Endothelial cell of umbilical vein (primary cell): ENCODE measurements at regions of chr17 and their contacts with region 1.

Region 1: DNA sequence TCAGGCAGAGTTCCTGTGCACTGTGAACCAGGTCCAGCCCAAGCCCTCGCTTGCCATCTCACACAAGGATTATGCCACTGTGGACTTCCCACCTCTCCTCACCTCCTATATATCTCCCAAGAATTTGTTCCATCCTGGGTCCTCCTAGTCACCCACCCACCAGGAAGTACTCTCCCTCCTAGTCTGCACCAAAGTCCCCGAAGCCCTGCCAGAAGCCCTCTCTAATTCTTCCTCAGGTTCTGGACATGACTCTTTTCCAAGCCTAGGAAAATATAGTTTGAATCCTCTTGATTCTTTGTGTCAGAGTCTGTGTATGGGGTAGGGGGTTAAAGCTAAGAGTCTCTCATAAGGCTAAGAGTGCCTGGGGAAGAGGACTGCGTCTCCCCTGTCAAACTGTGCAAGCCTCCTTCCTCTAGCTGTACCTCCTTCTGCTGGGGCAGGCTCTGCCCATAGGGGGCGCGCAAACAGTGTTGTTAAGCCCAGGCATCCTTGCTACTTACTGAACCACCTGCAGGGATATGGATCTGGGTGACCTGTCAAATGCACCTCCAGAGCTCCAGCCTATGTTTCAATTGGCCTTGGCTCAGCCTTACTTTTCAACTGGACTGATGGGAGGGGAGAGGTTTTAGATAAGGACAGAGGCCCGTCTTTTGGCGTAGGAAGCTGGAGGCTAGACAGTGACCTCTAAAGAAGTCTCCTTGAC is 16.6 kb upstream of the DLX4 start:
- DNase-seq: peak; percentile 69
- H3K4me3 ChIP-seq: no peak overlapping the region
- H3K27ac ChIP-seq: no peak overlapping the region
- H3K4me1 ChIP-seq: peaks cover 19% of the 10 kb centered on the region
- H3K27me3 ChIP-seq: peaks cover 1 to 8% of the 10 kb centered on the region in 2 experiments
- CTCF ChIP-seq: peak; percentile 90 to 93
- POLR2A ChIP-seq: no peak

Region 2: GRCh38 chr17:49861150-49861892 is 91.0 kb before region 1 on chr17:
- CTCF ChIA-PET with region 1: interaction called, 3 read pairs
- POLR2A ChIA-PET with region 1: no interaction called
- dilution Hi-C with region 1: no loop called
- intact Hi-C with region 1: loop called (anchors 5 kb)
- DNase-seq: peak; percentile 30
- H3K4me3 ChIP-seq: no peak overlapping the region
- H3K27ac ChIP-seq: no peak overlapping the region
- H3K4me1 ChIP-seq: no peaks in the 10 kb centered on the region
- H3K27me3 ChIP-seq: peaks cover 3% of the 10 kb centered on the region in 2 experiments
- CTCF ChIP-seq: peak; percentile 57 to 78
- POLR2A ChIP-seq: no peak

Region 3: DNA sequence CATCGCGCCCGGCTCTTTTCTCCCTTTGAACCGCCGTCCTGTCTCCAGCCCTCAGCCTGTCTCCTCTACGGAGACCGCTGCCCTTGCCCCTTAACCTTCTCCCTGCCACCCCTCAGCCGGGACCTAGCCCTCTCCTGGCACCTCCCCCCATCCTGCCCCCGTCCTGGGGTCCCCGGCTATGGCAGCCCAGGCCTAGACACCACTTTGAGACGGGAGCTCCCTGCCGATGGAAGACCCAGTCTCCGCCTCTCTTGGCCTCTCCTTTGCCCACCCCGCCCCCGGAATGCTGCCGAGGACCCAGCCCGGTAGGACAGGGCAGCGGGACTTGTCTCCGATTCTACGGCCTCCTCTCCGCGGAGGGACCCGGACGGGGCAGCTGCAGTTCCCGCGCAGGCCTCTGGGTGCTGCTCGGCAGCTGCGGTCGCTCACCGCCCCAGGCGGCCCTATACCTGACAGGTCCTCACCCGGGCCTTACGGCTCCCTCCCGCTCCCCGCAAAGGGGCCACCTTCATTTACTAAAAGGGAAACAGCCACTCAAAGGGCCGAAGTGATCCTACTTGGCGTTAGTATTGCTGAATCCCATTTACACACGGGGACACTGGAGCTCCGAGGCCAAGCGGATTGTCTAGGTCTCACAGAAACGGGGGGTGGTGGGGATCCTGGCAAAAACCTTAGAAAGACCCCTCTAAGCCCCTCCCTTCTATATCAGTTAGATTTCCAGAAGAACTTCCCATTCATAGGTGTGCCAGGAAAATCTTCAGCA is 71.9 kb before region 1 on chr17:
- CTCF ChIA-PET with region 1: interaction called, 6 read pairs
- POLR2A ChIA-PET with region 1: no interaction called
- dilution Hi-C with region 1: no loop called
- intact Hi-C with region 1: loop called (anchors 5 kb)
- DNase-seq: peak; percentile 54
- H3K4me3 ChIP-seq: no peak overlapping the region
- H3K27ac ChIP-seq: no peak overlapping the region
- H3K4me1 ChIP-seq: no peaks in the 10 kb centered on the region
- H3K27me3 ChIP-seq: peaks cover 19 to 23% of the 10 kb centered on the region in 2 experiments
- CTCF ChIP-seq: peak; percentile 83 to 98
- POLR2A ChIP-seq: no peak

Region 4: DNA sequence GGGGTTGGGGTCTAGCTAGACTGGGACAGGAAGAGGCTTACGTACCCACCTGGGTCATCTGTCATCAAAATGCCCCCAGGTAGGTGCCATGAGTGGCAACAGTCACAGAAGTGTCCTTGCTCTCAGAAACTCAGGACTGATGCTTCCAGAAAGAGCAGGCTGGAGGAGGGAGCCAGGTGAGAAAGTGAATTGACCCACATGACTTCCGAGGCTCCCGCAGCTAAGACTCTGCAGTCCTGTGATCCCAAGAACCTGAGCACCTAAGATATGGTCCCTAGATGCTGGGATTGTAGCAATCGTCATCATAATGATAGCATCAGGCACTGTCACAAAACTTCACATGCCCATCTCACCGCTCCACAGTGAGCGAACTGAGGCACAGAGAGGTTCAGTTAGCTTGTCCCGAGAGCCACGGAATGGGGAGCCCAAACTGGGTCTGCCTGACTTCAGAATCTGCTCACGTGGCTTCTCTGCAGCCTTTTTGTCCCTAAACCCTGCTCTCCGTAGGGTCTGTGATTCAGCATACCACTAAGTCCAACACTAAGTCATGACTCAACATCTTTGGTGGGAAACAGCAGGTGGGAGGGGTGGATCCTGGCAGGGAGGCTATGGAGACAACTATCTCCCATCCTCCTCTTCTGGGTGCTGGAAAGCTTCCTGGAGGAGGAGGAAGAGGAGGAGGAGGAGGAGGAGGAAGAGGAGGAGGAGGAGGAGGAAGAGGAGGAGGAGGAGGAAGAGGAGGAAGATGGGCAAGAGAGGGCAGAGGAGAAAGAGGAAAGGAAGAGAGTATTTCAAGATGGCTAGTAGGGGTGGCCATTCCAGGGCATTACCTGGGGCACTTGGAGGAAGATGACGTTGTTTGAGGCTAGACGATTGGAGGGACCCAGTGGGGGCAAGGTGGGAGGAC is 38.9 kb before region 1 on chr17:
- CTCF ChIA-PET with region 1: interaction called, 16 read pairs
- POLR2A ChIA-PET with region 1: no interaction called
- dilution Hi-C with region 1: no loop called
- intact Hi-C with region 1: no loop called
- DNase-seq: no peak
- H3K4me3 ChIP-seq: no peak overlapping the region
- H3K27ac ChIP-seq: no peak overlapping the region
- H3K4me1 ChIP-seq: no peaks in the 10 kb centered on the region
- H3K27me3 ChIP-seq: peaks cover 73 to 75% of the 10 kb centered on the region in 2 experiments
- CTCF ChIP-seq: no peak
- POLR2A ChIP-seq: no peak

Region 5: GRCh38 chr17:49962599-49963308 is 10.4 kb after region 1 on chr17:
- CTCF ChIA-PET with region 1: interaction called, 6 read pairs
- POLR2A ChIA-PET with region 1: interaction called, 3 read pairs
- dilution Hi-C with region 1: no loop called
- intact Hi-C with region 1: loop called (anchors 1 kb)
- DNase-seq: no peak
- H3K4me3 ChIP-seq: no peak overlapping the region
- H3K27ac ChIP-seq: no peak overlapping the region
- H3K4me1 ChIP-seq: no peaks in the 10 kb centered on the region
- H3K27me3 ChIP-seq: peaks cover 57 to 60% of the 10 kb centered on the region in 2 experiments
- CTCF ChIP-seq: no peak
- POLR2A ChIP-seq: no peak

Region 6: GRCh38 chr17:49976163-49976827 is 23.9 kb after region 1 on chr17:
- CTCF ChIA-PET with region 1: interaction called, 11 read pairs
- POLR2A ChIA-PET with region 1: no interaction called
- dilution Hi-C with region 1: no loop called
- intact Hi-C with region 1: no loop called
- DNase-seq: no peak
- H3K4me3 ChIP-seq: no peak overlapping the region
- H3K27ac ChIP-seq: no peak overlapping the region
- H3K4me1 ChIP-seq: no peaks in the 10 kb centered on the region
- H3K27me3 ChIP-seq: peaks cover 65 to 76% of the 10 kb centered on the region in 2 experiments
- CTCF ChIP-seq: no peak
- POLR2A ChIP-seq: no peak

Region 7: DNA sequence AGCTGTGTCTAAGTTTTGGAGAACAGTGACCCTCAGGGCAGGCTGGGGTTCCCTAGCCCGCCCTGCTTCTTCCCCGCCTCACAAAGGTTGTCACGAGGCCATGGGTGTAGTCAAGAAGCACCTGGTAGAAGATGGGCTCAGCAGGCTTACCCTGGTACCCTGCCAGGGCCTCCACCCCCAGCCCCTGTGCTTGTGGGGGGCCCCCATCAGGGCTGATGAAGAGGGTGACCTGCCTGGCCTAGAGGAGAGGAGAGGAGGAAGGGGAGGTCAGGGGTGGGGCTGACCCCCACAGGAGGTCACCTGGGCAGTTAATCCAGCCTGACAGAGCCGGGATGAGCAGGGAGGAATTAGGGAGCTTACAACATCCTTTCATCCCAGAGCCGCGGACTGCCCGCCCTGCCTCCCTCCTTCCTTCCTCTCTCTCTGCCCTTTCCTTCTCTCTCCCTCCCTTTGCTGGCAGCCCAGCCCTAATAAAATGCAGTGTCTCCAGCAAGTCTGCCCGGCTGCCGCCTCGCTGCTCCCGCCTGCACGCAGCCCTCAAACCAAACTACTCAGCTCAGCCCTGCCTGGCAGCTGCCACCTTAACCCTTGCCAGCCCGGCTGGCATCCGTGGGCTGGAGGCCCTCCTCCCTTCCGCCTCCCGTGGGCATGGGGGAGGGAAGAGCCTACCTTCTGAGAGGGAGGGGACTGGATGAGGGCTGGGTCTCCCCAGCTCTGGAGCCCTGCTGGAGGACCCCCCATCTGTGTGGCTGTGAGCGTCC is 35.5 kb after region 1 on chr17:
- CTCF ChIA-PET with region 1: interaction called, 12 read pairs
- POLR2A ChIA-PET with region 1: no interaction called
- dilution Hi-C with region 1: no loop called
- intact Hi-C with region 1: no loop called
- DNase-seq: no peak
- H3K4me3 ChIP-seq: no peak overlapping the region
- H3K27ac ChIP-seq: no peak overlapping the region
- H3K4me1 ChIP-seq: no peaks in the 10 kb centered on the region
- H3K27me3 ChIP-seq: peaks cover 30 to 46% of the 10 kb centered on the region in 2 experiments
- CTCF ChIP-seq: no peak
- POLR2A ChIP-seq: no peak

Region 8: DNA sequence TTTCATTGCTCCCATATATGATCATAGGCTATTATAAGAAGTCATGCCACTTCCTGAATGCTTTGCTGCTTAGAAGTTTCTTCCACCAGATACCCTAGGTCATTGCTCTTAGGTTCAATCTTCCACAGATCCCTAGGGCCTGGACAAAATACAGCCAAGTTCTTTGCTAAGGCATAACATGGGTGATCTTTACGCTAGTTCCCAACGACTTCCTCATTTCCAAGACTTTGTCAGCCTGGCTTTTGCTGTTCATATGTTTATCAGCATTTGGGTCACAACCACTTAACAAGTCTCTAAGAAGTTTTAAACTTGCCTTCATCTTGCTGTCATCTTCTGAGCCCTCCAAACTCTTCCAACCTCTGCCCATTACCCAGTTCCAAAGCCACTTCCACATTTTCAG is 62.8 kb after region 1 on chr17:
- CTCF ChIA-PET with region 1: no interaction called
- POLR2A ChIA-PET with region 1: no interaction called
- dilution Hi-C with region 1: no loop called
- intact Hi-C with region 1: no loop called
- DNase-seq: no peak
- H3K4me3 ChIP-seq: no peak overlapping the region
- H3K27ac ChIP-seq: no peak overlapping the region
- H3K4me1 ChIP-seq: no peaks in the 10 kb centered on the region
- H3K27me3 ChIP-seq: peaks cover 8 to 19% of the 10 kb centered on the region in 2 experiments
- CTCF ChIP-seq: no peak
- POLR2A ChIP-seq: no peak